Left ventricle myocardium inferior (tissue), 1 donor: ENCODE measurements at regions of chr3 and their contacts with region 1.

Region 1: GRCh38 chr3:173411375-173411973 is 13.9 kb downstream of the NLGN1 start:
- DNase-seq: no peak
- H3K4me3 ChIP-seq: peak overlapping the region; percentile 42
- H3K27ac ChIP-seq: peak overlapping the region; percentile 27
- H3K4me1 ChIP-seq: peaks cover 19% of the 10 kb centered on the region
- H3K27me3 ChIP-seq: no peaks in the 10 kb centered on the region
- CTCF ChIP-seq: peak; percentile 64

Region 2: GRCh38 chr3:172931746-172932285 is 479.7 kb before region 1 on chr3:
- intact Hi-C with region 1: no loop called
- DNase-seq: no peak
- H3K4me3 ChIP-seq: no peak overlapping the region
- H3K27ac ChIP-seq: no peak overlapping the region
- H3K4me1 ChIP-seq: no peaks in the 10 kb centered on the region
- H3K27me3 ChIP-seq: no peaks in the 10 kb centered on the region
- CTCF ChIP-seq: no peak

Region 3: GRCh38 chr3:173553635-173554280 is 142.3 kb after region 1 on chr3:
- intact Hi-C with region 1: loop called (anchors 5 kb)
- DNase-seq: no peak
- H3K4me3 ChIP-seq: no peak overlapping the region
- H3K27ac ChIP-seq: no peak overlapping the region
- H3K4me1 ChIP-seq: no peaks in the 10 kb centered on the region
- H3K27me3 ChIP-seq: no peaks in the 10 kb centered on the region
- CTCF ChIP-seq: peak; percentile 83